Natural killer cell (primary cell): ENCODE measurements at regions of chrX and their contacts with region 1.

Region 1: GRCh38 chrX:1249101-1249887 is 19.3 kb upstream of the CSF2RA start:
- DNase-seq: peak in 1 of 2 donors; percentile 73
- ATAC-seq: peak; percentile 65 to 88 (median 75)
- H3K4me3 ChIP-seq: no peak overlapping the region
- H3K4me3 Mint-ChIP-seq: peak overlapping the region; percentile 69
- H3K27ac ChIP-seq: peak overlapping the region; percentile 73
- H3K27ac Mint-ChIP-seq: peak overlapping the region; percentile 76 to 79
- H3K4me1 ChIP-seq: peaks cover 37% of the 10 kb centered on the region
- H3K4me1 Mint-ChIP-seq: peaks cover 12 to 25% of the 10 kb centered on the region in 2 donors
- H3K27me3 ChIP-seq: no peaks in the 10 kb centered on the region
- H3K27me3 Mint-ChIP-seq: peaks cover 0 to 3% of the 10 kb centered on the region in 2 donors
- CTCF ChIP-seq: no peak

Region 2: GRCh38 chrX:1281521-1281920 is 32.2 kb after region 1 on chrX:
- intact Hi-C with region 1: no loop called
- DNase-seq: no peak
- ATAC-seq: no peak
- H3K4me3 ChIP-seq: no peak overlapping the region
- H3K4me3 Mint-ChIP-seq: no peak overlapping the region
- H3K27ac ChIP-seq: no peak overlapping the region
- H3K27ac Mint-ChIP-seq: no peak overlapping the region
- H3K4me1 ChIP-seq: peaks cover 14% of the 10 kb centered on the region
- H3K4me1 Mint-ChIP-seq: no peaks in the 10 kb centered on the region
- H3K27me3 ChIP-seq: no peaks in the 10 kb centered on the region
- H3K27me3 Mint-ChIP-seq: peaks cover 14 to 17% of the 10 kb centered on the region in 2 donors
- CTCF ChIP-seq: no peak

Region 3: DNA sequence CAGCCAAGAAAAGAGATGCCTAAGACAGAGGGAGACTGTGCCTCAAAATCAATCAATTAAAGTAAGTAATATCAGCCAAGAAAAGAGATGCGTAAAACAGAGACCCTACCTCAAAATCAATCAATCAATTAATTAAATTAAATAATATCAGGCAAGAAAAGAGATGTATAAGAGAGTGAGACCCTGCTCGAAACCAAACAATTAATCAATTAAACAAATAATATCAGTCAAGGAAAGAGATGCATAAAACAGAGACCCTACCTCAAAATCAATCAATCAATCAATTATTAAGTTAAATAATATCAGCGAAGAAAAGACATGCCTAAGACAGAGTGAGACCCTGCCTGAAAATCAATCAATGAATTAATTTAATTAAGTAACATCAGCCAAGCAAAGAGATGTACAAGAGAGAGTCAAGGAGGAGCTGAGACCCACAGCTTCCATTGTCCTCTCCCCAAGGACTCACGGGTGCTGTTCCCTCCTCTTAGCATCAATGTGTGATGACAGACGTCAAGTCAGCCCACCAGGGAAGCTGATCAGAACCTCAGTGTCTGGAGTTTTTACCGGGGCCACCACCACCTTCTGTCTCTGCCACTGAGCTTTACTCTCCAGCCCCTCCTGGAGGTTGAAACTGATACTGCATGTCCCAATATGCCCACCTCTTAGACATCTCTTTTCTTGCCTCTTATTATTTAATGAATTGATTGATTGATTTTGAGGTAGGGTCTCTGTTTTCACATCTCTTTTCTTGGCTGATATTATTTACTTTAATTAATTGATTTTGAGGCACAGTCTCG is 331.6 kb after region 1 on chrX:
- intact Hi-C with region 1: loop called (anchors 2 kb)
- DNase-seq: peak; percentile 70 to 87
- ATAC-seq: peak; percentile 95 to 99 (median 99)
- H3K4me3 ChIP-seq: no peak overlapping the region
- H3K4me3 Mint-ChIP-seq: no peak overlapping the region
- H3K27ac ChIP-seq: no peak overlapping the region
- H3K27ac Mint-ChIP-seq: peak overlapping the region in 1 of 2 donors; percentile 50
- H3K4me1 ChIP-seq: peaks cover 8% of the 10 kb centered on the region
- H3K4me1 Mint-ChIP-seq: peaks cover 8 to 11% of the 10 kb centered on the region in 2 donors
- H3K27me3 ChIP-seq: no peaks in the 10 kb centered on the region
- H3K27me3 Mint-ChIP-seq: no peaks in the 10 kb centered on the region
- CTCF ChIP-seq: peak; percentile 92

Region 4: GRCh38 chrX:1649621-1650020 is 400.3 kb after region 1 on chrX:
- intact Hi-C with region 1: no loop called
- DNase-seq: no peak
- ATAC-seq: no peak
- H3K4me3 ChIP-seq: no peak overlapping the region
- H3K4me3 Mint-ChIP-seq: no peak overlapping the region
- H3K27ac ChIP-seq: no peak overlapping the region
- H3K27ac Mint-ChIP-seq: no peak overlapping the region
- H3K4me1 ChIP-seq: peaks cover 5% of the 10 kb centered on the region
- H3K4me1 Mint-ChIP-seq: peaks cover 5 to 6% of the 10 kb centered on the region in 2 donors
- H3K27me3 ChIP-seq: no peaks in the 10 kb centered on the region
- H3K27me3 Mint-ChIP-seq: peaks cover 7 to 13% of the 10 kb centered on the region in 2 donors
- CTCF ChIP-seq: no peak

Region 5: GRCh38 chrX:2595258-2595657 is 1346.0 kb after region 1 on chrX:
- intact Hi-C with region 1: loop called (anchors 2 kb)
- DNase-seq: no peak
- ATAC-seq: no peak
- H3K4me3 ChIP-seq: no peak overlapping the region
- H3K4me3 Mint-ChIP-seq: no peak overlapping the region
- H3K27ac ChIP-seq: no peak overlapping the region
- H3K27ac Mint-ChIP-seq: peak overlapping the region in 1 of 2 donors; percentile 31
- H3K4me1 ChIP-seq: peaks cover 4% of the 10 kb centered on the region
- H3K4me1 Mint-ChIP-seq: peaks cover 11 to 13% of the 10 kb centered on the region in 2 donors
- H3K27me3 ChIP-seq: no peaks in the 10 kb centered on the region
- H3K27me3 Mint-ChIP-seq: no peaks in the 10 kb centered on the region
- CTCF ChIP-seq: no peak